ENCODE measurements at regions of chr7 and their contacts with region 1.

Region 1: DNA sequence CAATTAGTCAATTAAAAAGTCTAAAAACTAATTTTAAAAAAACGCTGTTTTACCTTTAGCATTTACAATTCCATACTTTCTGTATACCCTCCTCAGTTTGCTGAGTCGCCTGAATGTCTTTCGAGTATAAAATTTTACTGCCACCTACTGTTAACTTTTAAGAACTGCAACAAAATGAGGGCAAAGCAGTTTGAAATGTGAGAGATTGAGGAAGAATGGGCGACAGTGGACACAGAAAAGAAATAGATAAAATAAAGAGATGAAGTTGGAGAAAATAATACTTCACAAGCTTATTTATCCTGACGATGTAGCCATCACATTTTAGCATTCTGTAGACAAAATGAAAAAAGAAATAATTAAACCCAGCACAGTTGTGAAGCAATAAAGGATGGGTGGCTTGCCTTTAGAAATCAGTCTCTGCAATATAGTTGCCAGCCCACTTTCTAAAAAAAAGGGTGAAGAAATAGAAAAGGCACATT is 110.8 kb upstream of the PTN start:
- DNase-seq: no peak
- ATAC-seq: peak; percentile 63 to 84 (median 74)
- H3K4me3 ChIP-seq: no peak overlapping the region
- H3K27ac ChIP-seq: no peak overlapping the region
- H3K4me1 ChIP-seq: no peaks in the 10 kb centered on the region
- H3K27me3 ChIP-seq: no peaks in the 10 kb centered on the region
- CTCF ChIP-seq: peak; percentile 57 to 71 (median 64)
- POLR2A ChIP-seq: no peak

Region 2: DNA sequence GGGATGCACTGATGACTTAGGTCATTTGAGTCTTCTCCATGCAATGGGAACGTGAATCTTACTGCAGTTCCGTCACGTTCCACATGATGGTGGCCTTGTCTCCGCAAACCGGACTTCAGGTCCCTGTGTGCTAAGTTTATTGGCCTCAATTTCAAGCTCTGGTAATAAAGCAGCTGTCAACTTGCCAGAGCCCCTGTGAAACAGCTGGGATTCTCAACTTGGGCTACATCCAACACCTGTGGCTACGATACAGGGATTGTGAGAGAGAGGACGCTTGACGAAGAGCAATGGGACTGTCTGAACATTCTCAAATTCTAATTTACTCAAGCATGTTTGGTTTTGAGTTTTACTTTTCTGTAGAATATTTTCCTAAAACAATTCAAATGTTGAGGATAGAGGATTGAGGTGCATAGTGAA is 285.0 kb before region 1 on chr7:
- intact Hi-C with region 1: loop called in 1 of 2 experiments (anchors 5 kb)
- DNase-seq: peak; percentile 37 to 69 (median 56)
- ATAC-seq: peak; percentile 96 to 98 (median 98)
- H3K4me3 ChIP-seq: no peak overlapping the region
- H3K27ac ChIP-seq: no peak overlapping the region
- H3K4me1 ChIP-seq: no peaks in the 10 kb centered on the region
- H3K27me3 ChIP-seq: no peaks in the 10 kb centered on the region
- CTCF ChIP-seq: peak; percentile 59 to 81 (median 80)
- POLR2A ChIP-seq: no peak